ENCODE measurements at regions of chr5 and their contacts with region 1.

Region 1: DNA sequence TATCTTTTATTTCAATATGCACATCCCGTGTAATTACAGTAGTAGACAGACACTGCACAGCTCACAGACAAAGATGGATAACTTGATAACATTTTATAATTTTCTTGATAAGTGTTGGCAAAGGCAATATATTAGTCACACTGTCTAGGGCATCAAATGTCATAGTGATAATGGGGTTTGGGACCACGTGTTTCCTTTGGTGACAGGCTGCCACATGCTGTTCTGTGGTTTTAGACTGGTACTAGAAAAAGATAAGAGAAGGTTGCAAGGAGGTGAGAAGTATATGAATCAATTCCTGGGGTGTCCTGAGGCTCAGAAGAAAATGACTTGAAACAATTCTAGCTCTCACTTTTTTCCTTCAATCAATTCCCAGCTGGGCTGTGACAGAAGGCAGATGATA is 258.8 kb upstream of the CHD1 start:
- DNase-seq: no peak
- H3K4me3 ChIP-seq: no peak overlapping the region
- H3K27ac ChIP-seq: no peak overlapping the region
- H3K4me1 ChIP-seq: no peaks in the 10 kb centered on the region
- H3K27me3 ChIP-seq: no peaks in the 10 kb centered on the region
- CTCF ChIP-seq: no peak

Region 2: DNA sequence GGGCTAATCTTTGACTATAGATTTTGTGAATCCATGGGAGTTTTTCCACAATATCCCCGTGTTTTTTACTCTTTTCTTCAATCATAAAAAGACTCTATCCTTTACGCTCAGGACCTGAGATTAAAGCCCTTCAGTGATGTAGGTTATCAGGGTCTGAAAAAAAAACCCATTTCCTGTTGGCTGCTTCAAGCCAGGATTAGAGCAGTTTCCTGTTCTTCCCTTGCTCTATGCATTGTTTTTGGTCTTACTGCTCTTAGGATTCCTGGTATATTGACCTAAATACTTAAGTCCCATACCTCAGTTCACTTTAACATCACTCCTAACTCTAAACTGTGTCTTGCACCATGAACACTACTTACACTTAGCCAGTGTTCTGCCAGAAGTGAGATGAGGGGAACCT is 60.5 kb after region 1 on chr5:
- CTCF ChIA-PET with region 1: no interaction called
- dilution Hi-C with region 1: no loop called
- in situ Hi-C with region 1: loop called in 1 of 2 experiments (anchors 10 kb)
- intact Hi-C with region 1: no loop called
- DNase-seq: no peak
- H3K4me3 ChIP-seq: no peak overlapping the region
- H3K27ac ChIP-seq: no peak overlapping the region
- H3K4me1 ChIP-seq: no peaks in the 10 kb centered on the region
- H3K27me3 ChIP-seq: no peaks in the 10 kb centered on the region
- CTCF ChIP-seq: no peak

Region 3: GRCh38 chr5:99835791-99836190 is 648.2 kb after region 1 on chr5:
- CTCF ChIA-PET with region 1: no interaction called
- dilution Hi-C with region 1: no loop called
- in situ Hi-C with region 1: no loop called
- intact Hi-C with region 1: no loop called
- DNase-seq: no peak
- H3K4me3 ChIP-seq: no peak overlapping the region
- H3K27ac ChIP-seq: no peak overlapping the region
- H3K4me1 ChIP-seq: no peaks in the 10 kb centered on the region
- H3K27me3 ChIP-seq: no peaks in the 10 kb centered on the region
- CTCF ChIP-seq: no peak

Measured in mammary epithelial cell (primary cell).